IMR-90 (cell line): ENCODE measurements at regions of chr20 and their contacts with region 1.

Region 1: GRCh38 chr20:36128463-36129159 is 25.9 kb upstream of the EPB41L1 start:
- DNase-seq: peak; percentile 85
- ATAC-seq: peak; percentile 91
- H3K4me3 ChIP-seq: no peak overlapping the region
- H3K27ac ChIP-seq: no peak overlapping the region
- H3K4me1 ChIP-seq: peaks cover 10% of the 10 kb centered on the region
- H3K27me3 ChIP-seq: no peaks in the 10 kb centered on the region
- CTCF ChIP-seq: no peak
- POLR2A ChIP-seq: no peak
- RAD21 ChIP-seq: no peak

Region 2: DNA sequence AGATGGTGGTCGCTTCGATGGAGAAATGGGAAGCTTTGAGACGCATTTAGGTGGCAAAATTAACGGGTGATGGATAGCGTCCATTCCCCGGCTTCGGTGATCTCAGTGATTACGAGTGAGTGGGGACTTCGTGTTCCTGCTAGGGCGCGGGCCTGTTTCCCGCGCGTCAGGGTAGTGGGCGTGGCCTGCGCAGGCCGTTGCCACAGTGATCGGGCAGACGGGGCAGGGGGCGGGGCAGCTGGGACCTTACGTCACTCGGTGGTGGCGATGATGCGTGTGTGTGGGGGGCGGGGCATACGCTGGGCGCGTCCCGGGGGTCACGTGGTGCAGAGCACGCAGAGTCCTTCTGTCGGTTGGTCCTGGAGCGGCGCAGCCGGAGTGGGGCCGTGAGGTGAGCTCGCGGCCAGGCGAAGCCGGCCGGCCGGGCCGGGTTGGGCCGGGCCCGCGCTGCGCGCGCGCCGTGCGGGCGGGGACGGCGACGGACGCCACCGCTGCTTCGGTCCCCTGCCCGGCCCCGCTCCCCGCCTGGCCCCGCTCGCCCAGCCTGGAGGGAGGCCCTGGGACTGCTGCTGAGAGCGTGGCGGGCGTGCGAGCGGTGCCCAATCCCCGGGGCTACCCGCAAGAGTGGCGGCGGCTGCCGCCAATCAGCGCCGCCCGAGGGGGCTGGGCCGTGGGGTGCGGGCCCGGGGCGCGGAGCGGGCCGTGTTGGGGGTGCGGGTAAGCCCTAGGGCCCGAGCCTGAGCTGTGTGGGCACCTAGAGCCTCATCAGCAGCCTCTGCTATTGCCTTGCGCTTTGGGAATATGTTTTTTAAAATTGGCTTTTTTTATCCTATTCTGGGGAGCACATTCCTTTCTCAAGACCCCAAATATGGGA is 356.7 kb before region 1 on chr20 and contains the start of gene PHF20:
- CTCF ChIA-PET with region 1: no interaction called
- POLR2A ChIA-PET with region 1: no interaction called
- dilution Hi-C with region 1: no loop called
- in situ Hi-C with region 1: loop called (anchors 25 kb)
- intact Hi-C with region 1: no loop called
- DNase-seq: peak; percentile 96
- ATAC-seq: peak; percentile 93
- H3K4me3 ChIP-seq: peak within 1 kb of the TSS; percentile 94
- H3K27ac ChIP-seq: peak within 1 kb of the TSS; percentile 79
- H3K4me1 ChIP-seq: peaks cover 21% of the 10 kb centered on the region
- H3K27me3 ChIP-seq: no peaks in the 10 kb centered on the region
- CTCF ChIP-seq: no peak
- POLR2A ChIP-seq: peak; percentile 84
- RAD21 ChIP-seq: no peak
- total RNA-seq, gene PHF20: 22.0 and 30.3 TPM in 2 replicates